Colonic mucosa (tissue), 4 donors: ENCODE measurements at regions of chr10 and their contacts with region 1.

Region 1: DNA sequence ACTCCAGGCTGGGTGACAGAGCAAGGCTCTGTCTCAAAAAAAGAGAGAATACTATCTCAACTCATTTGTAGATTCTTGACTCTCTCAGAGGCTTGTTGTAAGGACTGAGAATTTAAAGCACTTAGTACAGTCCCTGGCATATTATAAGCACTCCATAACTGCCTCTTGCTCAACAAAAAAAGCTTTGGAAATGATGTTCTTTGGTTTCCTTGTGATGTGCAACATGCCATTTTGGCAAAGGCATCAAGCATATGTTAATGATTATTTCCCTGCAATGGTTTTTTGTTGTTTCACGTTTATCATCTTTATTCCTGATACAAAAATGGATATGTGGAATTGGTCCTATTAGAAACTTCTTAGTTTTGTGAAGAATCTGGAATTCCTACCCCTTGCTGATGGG is 15.7 kb downstream of the NOLC1 start:
- DNase-seq: no peak
- H3K4me3 ChIP-seq: no peak overlapping the region
- H3K27ac ChIP-seq: no peak overlapping the region
- H3K4me1 ChIP-seq: no peaks in the 10 kb centered on the region
- H3K27me3 ChIP-seq: no peaks in the 10 kb centered on the region
- CTCF ChIP-seq: no peak

Region 2: GRCh38 chr10:102352066-102352715 is 184.3 kb after region 1 on chr10:
- intact Hi-C with region 1: loop called (anchors 10 kb)
- DNase-seq: peak; percentile 69
- H3K4me3 ChIP-seq: no peak overlapping the region
- H3K27ac ChIP-seq: no peak overlapping the region
- H3K4me1 ChIP-seq: no peaks in the 10 kb centered on the region
- H3K27me3 ChIP-seq: no peaks in the 10 kb centered on the region
- CTCF ChIP-seq: peak; percentile 92

Region 3: GRCh38 chr10:102678842-102679289 is 511.0 kb after region 1 on chr10:
- intact Hi-C with region 1: no loop called
- DNase-seq: peak; percentile 70
- H3K4me3 ChIP-seq: no peak overlapping the region
- H3K27ac ChIP-seq: no peak overlapping the region
- H3K4me1 ChIP-seq: peaks cover 17% of the 10 kb centered on the region
- H3K27me3 ChIP-seq: no peaks in the 10 kb centered on the region
- CTCF ChIP-seq: peak; percentile 62